ENCODE measurements at regions of chr15 and their contacts with region 1.

Region 1: GRCh38 chr15:101641166-101641764 is 10.9 kb downstream of the TM2D3 start:
- DNase-seq: peak; percentile 53 to 85 (median 75)
- ATAC-seq: peak; percentile 81
- H3K4me3 ChIP-seq: no peak overlapping the region
- H3K4me3 Mint-ChIP-seq: no peak overlapping the region
- H3K27ac ChIP-seq: peak overlapping the region in 1 of 2 experiments; percentile 59
- H3K27ac Mint-ChIP-seq: peak overlapping the region; percentile 89
- H3K4me1 ChIP-seq: peaks cover 13% of the 10 kb centered on the region
- H3K4me1 Mint-ChIP-seq: peaks cover 26% of the 10 kb centered on the region
- H3K27me3 ChIP-seq: no peaks in the 10 kb centered on the region
- H3K27me3 Mint-ChIP-seq: no peaks in the 10 kb centered on the region
- CTCF ChIP-seq: peak; percentile 99

Region 2: GRCh38 chr15:101000271-101000681 is 641.0 kb before region 1 on chr15:
- CTCF ChIA-PET with region 1: no interaction called
- POLR2A ChIA-PET with region 1: no interaction called
- intact Hi-C with region 1: no loop called
- DNase-seq: no peak
- ATAC-seq: no peak
- H3K4me3 ChIP-seq: no peak overlapping the region
- H3K4me3 Mint-ChIP-seq: no peak overlapping the region
- H3K27ac ChIP-seq: no peak overlapping the region
- H3K27ac Mint-ChIP-seq: no peak overlapping the region
- H3K4me1 ChIP-seq: no peaks in the 10 kb centered on the region
- H3K4me1 Mint-ChIP-seq: no peaks in the 10 kb centered on the region
- H3K27me3 ChIP-seq: no peaks in the 10 kb centered on the region
- H3K27me3 Mint-ChIP-seq: peaks cover 7% of the 10 kb centered on the region
- CTCF ChIP-seq: no peak

Region 3: DNA sequence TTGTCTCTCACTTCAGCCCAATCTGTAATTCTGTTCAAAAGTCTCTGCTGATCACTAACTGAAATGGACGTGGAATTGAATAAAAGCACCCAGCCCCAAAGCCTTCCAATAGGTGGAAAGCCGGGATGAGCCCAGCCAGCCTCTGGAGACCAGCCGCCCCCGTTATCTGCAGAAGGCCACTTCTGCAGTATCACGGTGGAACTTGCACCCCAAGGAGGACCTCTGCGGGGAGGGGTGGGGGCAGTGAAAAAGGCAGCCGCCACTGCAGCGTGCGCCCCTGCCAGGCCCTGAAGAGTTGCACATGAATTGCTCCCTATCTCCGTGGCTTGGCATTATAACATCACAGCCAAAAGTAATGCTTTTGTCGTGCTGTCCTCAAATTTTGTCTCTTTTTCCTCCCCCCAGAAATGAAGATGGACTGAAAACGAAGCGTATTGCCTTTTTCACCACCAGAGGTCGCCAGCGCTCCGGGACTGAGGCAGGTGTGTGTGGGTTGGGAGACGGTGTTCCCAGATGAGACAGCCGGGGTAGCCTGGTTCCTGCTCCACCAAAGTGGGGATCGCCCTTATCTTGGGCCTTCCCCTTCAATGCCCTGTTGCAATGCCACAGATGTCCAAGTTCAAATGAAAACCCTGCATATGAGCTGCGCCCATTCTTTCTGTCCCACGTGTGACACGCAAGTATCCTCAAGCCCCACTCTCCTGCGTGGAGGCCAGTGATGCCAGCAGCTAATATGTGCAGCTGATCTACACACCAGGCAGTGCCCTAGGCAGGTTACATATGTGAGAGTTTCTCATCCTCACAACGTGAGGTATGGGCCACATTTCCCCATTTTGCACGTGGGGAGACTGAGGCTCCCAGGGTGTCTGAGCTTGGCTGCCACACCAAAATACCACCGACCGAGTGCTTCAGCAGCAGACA is 626.1 kb before region 1 on chr15:
- CTCF ChIA-PET with region 1: no interaction called
- POLR2A ChIA-PET with region 1: no interaction called
- intact Hi-C with region 1: loop called in 1 of 2 experiments (anchors 10 kb)
- DNase-seq: peak; percentile 17 to 78 (median 68)
- ATAC-seq: peak; percentile 42
- H3K4me3 ChIP-seq: no peak overlapping the region
- H3K4me3 Mint-ChIP-seq: no peak overlapping the region
- H3K27ac ChIP-seq: no peak overlapping the region
- H3K27ac Mint-ChIP-seq: no peak overlapping the region
- H3K4me1 ChIP-seq: no peaks in the 10 kb centered on the region
- H3K4me1 Mint-ChIP-seq: no peaks in the 10 kb centered on the region
- H3K27me3 ChIP-seq: no peaks in the 10 kb centered on the region
- H3K27me3 Mint-ChIP-seq: peaks cover 9% of the 10 kb centered on the region
- CTCF ChIP-seq: peak; percentile 73

Measured in CD8-positive, alpha-beta T cell (primary cell).